ENCODE measurements at regions of chr3 and their contacts with region 1.

Region 1: DNA sequence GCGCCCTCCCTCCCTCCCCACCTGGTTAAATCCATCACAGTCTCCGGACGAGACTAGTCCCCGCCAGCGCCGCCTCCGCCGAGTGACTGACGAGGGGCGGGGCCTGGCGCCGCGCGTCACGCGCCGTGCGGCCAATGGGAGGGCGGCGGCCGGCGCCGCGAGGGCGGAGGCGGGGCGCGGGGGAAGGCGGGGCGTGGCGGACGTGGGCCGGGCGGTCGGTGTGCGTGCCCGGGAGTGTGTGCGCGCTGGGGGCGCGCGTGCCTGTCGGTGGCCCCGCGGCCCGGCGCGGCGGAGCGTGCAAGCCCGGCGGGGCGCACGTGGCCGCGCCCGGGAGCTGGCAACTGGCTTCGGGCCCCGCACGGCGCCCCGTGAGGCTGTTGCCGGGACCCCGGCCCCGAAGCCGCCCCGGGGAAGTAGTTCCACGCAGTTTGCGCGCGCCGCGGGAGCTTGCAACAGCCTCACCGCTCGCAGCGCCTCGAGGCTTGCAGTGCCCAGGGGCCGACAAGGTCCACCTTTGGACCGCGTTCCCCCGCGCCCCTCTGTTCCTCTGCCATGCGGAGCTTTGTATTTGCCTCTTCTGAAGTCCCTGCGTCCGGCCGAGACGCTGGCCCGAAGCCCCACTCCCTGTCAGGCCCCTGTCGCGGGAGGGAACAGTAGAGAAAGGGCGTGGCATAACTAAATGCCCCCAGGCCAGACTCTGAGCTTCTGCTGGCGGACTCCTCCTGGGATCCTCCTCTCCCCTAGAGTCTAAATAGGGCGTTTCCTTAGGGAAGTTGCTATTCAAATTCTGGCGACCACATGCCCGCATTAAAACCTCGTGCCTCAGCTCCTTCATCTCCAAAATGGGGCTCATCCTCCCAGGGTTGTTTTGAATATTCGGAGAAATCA is 400.9 kb downstream of the SHQ1 start:
- DNase-seq: peak; percentile 95 to 98
- ATAC-seq: peak; percentile 96
- H3K4me3 ChIP-seq: peak overlapping the region; percentile 36 to 78
- H3K27ac ChIP-seq: peak overlapping the region in 1 of 2 donors; percentile 52
- H3K4me1 ChIP-seq: no peaks in the 10 kb centered on the region
- H3K27me3 ChIP-seq: no peaks in the 10 kb centered on the region

Region 2: GRCh38 chr3:72482589-72483321 is 35.5 kb after region 1 on chr3:
- intact Hi-C with region 1: loop called (anchors 2 to 5 kb)
- DNase-seq: peak; percentile 79 to 93
- ATAC-seq: peak; percentile 82
- H3K4me3 ChIP-seq: peak overlapping the region in 1 of 2 donors; percentile 39
- H3K27ac ChIP-seq: peak overlapping the region; percentile 21 to 86
- H3K4me1 ChIP-seq: peaks cover 0 to 8% of the 10 kb centered on the region in 2 donors
- H3K27me3 ChIP-seq: no peaks in the 10 kb centered on the region

Region 3: GRCh38 chr3:72800869-72801268 is 353.6 kb after region 1 on chr3:
- intact Hi-C with region 1: loop called in 1 of 2 experiments (anchors 10 kb)
- DNase-seq: no peak
- ATAC-seq: no peak
- H3K4me3 ChIP-seq: no peak overlapping the region
- H3K27ac ChIP-seq: no peak overlapping the region
- H3K4me1 ChIP-seq: peaks cover 0 to 1% of the 10 kb centered on the region in 2 donors
- H3K27me3 ChIP-seq: no peaks in the 10 kb centered on the region

Measured in aorta (tissue), 5 donors.